CD4-positive, alpha-beta T cell (primary cell): ENCODE measurements at regions of chr16 and their contacts with region 1.

Region 1: DNA sequence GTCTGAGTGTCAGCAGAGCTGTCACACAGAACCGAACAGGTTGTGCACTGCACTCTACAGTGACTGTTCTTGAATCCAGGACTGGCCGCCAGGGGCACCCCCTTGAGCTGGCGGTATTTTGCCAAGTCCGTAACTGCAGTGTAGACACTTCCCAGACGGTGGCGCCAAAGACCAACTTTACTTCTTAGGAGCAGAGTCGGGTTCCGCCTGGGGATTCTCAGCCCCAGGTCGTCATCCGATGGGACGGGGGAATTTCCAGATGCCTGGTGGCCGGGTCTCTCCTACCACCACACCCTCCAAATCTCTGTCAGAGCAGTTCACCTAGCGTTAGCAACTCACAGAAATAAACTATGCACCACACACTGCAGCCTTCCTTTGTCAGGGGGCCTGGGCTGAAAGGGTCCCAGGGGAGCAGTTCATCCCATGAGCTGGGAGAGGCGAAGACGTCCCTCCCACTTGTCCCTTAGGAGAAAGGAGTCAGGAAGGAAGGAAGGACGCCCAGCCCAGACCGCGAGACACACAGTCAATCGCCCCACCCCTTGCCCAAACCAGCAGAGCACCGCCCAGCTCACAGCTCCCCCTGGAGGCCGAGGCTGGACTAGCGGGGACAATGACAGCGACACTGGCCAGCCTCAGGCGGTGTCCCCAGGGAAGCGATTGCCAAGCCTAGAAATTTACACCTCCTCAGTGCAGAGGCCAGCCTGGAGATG is 7.4 kb upstream of the RIPOR1 start:
- DNase-seq: peak; percentile 93 to 99 (median 97)
- ATAC-seq: peak; percentile 90
- H3K4me3 ChIP-seq: peak overlapping the region; percentile 67
- H3K4me3 Mint-ChIP-seq: peak overlapping the region; percentile 87
- H3K27ac ChIP-seq: peak overlapping the region; percentile 96 to 99
- H3K27ac Mint-ChIP-seq: peak overlapping the region; percentile 90
- H3K4me1 ChIP-seq: peaks cover 22% of the 10 kb centered on the region
- H3K4me1 Mint-ChIP-seq: peaks cover 15% of the 10 kb centered on the region
- H3K27me3 ChIP-seq: no peaks in the 10 kb centered on the region
- H3K27me3 Mint-ChIP-seq: no peaks in the 10 kb centered on the region
- CTCF ChIP-seq: peak; percentile 92

Region 2: GRCh38 chr16:67198238-67198734 is 323.0 kb before region 1 on chr16:
- CTCF ChIA-PET with region 1: no interaction called
- POLR2A ChIA-PET with region 1: no interaction called
- intact Hi-C with region 1: no loop called
- DNase-seq: peak in 3 of 14 experiments; percentile 19 to 59 (median 43)
- ATAC-seq: peak; percentile 58
- H3K4me3 ChIP-seq: no peak overlapping the region
- H3K4me3 Mint-ChIP-seq: peak overlapping the region; percentile 20
- H3K27ac ChIP-seq: no peak overlapping the region
- H3K27ac Mint-ChIP-seq: peak overlapping the region; percentile 30
- H3K4me1 ChIP-seq: peaks cover 32% of the 10 kb centered on the region
- H3K4me1 Mint-ChIP-seq: peaks cover 31% of the 10 kb centered on the region
- H3K27me3 ChIP-seq: no peaks in the 10 kb centered on the region
- H3K27me3 Mint-ChIP-seq: no peaks in the 10 kb centered on the region
- CTCF ChIP-seq: no peak

Region 3: DNA sequence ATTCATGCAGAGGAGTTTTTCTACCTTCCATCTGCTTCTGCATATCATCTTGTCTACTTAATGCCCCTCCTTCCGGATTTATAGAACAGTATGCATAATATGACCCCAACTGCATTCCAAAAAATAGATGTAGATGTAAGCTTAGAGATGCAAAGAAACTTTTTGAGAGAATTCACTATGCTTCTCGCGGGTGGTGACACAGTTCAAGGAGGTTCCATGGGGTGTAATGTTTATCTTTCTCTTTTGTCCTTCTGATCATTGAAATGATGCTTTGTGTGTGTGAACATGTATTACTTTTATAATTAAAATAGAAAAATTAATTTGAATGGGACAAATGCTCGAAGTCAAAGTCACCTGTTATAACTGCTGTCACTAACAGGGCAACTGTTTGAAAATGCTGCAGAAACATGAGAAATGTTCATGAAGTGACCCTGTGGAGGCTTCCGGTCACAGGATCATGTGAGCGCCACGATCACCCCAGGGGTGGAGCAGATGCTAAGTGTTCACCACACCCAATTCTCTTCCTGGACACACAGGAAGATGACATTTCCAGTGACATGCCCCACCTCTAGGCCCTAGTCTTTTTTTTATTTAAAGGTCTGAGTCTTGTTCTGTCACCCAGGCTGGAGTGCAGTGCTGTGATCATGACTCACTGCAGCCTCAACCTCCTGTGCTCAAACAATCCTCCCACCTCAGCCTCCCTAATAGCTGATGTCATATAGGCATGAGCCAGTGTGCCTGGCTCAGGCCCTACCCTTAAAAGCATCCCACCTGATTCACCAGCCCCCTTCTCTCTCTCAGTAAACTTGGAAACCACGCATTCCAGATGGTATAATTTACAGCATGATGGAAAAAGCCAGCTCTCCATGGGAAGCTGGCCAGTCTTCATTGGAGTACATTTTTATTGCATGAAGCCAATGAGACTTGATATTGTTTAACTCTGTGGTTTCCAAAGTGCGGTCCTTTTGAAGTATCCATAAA is 16.9 kb before region 1 on chr16:
- CTCF ChIA-PET with region 1: interaction called, 19 read pairs
- POLR2A ChIA-PET with region 1: interaction called, 3 read pairs
- intact Hi-C with region 1: no loop called
- DNase-seq: peak in 12 of 14 experiments; percentile 16 to 93 (median 34)
- ATAC-seq: peak; percentile 87
- H3K4me3 ChIP-seq: no peak overlapping the region
- H3K4me3 Mint-ChIP-seq: peak overlapping the region; percentile 52
- H3K27ac ChIP-seq: peak overlapping the region; percentile 53 to 79
- H3K27ac Mint-ChIP-seq: peak overlapping the region; percentile 91
- H3K4me1 ChIP-seq: peaks cover 58% of the 10 kb centered on the region
- H3K4me1 Mint-ChIP-seq: peaks cover 50% of the 10 kb centered on the region
- H3K27me3 ChIP-seq: no peaks in the 10 kb centered on the region
- H3K27me3 Mint-ChIP-seq: no peaks in the 10 kb centered on the region
- CTCF ChIP-seq: no peak

Region 4: DNA sequence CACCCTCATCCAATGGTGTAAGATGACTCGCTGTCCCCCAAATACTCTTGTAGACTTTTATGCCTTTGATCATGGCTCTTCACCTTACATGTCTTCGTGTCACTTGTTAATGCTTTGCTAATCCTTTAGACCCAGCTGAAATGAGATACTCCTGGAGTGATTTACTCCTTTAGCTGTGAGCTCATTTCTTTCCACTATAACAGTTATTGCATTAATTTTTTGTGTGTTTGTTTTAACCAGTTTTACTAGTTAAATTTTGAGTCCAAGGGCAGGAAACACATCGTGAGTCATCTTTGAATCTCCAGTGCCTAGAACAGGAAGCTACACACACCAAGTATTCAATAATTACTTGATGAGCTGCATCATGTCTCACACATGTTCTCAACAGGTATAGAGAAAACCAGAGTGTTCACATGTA is 34.6 kb after region 1 on chr16:
- CTCF ChIA-PET with region 1: interaction called, 16 read pairs
- POLR2A ChIA-PET with region 1: interaction called, 4 read pairs
- intact Hi-C with region 1: loop called in 1 of 2 experiments (anchors 5 kb)
- DNase-seq: peak in 4 of 14 experiments; percentile 40 to 80 (median 71)
- ATAC-seq: peak; percentile 95
- H3K4me3 ChIP-seq: no peak overlapping the region
- H3K4me3 Mint-ChIP-seq: peak overlapping the region; percentile 80
- H3K27ac ChIP-seq: peak overlapping the region; percentile 71 to 77
- H3K27ac Mint-ChIP-seq: peak overlapping the region; percentile 91
- H3K4me1 ChIP-seq: peaks cover 54% of the 10 kb centered on the region
- H3K4me1 Mint-ChIP-seq: peaks cover 52% of the 10 kb centered on the region
- H3K27me3 ChIP-seq: no peaks in the 10 kb centered on the region
- H3K27me3 Mint-ChIP-seq: no peaks in the 10 kb centered on the region
- CTCF ChIP-seq: no peak

Region 5: GRCh38 chr16:67613808-67614207 is 92.6 kb after region 1 on chr16:
- CTCF ChIA-PET with region 1: interaction called, 10 read pairs
- POLR2A ChIA-PET with region 1: no interaction called
- intact Hi-C with region 1: no loop called
- DNase-seq: peak in 3 of 14 experiments; percentile 13 to 30 (median 16)
- ATAC-seq: no peak
- H3K4me3 ChIP-seq: no peak overlapping the region
- H3K4me3 Mint-ChIP-seq: no peak overlapping the region
- H3K27ac ChIP-seq: no peak overlapping the region
- H3K27ac Mint-ChIP-seq: no peak overlapping the region
- H3K4me1 ChIP-seq: no peaks in the 10 kb centered on the region
- H3K4me1 Mint-ChIP-seq: no peaks in the 10 kb centered on the region
- H3K27me3 ChIP-seq: no peaks in the 10 kb centered on the region
- H3K27me3 Mint-ChIP-seq: no peaks in the 10 kb centered on the region
- CTCF ChIP-seq: no peak

Region 6: DNA sequence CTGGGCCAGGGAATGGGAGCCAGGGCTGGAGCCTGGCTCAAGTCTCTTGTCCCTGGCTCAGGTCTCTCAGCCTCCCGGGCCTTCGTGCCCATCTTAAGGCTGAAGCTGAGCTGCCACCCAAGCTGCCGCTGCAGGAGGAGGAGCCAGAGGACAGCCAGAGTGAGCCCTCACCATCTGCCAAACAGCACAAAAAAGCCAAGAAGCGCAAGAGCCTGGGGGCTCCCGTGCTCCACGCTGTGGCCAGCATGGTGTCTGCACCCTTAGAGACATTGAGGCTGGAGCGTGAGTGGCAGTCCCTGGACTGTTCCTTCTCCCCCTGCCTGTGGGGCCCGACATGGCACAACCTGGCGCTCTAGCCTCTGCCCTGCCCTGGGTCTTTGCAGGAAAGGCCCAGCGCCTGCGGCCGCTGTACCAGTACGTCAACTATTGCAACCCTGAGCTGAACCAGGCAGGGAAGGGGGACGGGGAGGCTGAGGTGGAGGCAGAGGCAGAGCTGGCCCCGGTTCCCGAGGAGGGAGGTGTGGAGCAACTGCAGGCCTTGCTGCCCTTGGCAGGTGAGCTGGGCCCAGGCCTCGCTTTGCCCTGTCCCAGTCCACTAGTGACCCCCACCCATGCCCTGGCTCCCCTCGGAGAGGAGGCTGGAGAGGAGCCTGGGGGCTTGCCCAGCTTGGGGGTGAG is 146.7 kb after region 1 on chr16:
- CTCF ChIA-PET with region 1: interaction called, 81 read pairs
- POLR2A ChIA-PET with region 1: interaction called, 13 read pairs
- intact Hi-C with region 1: loop called (anchors 1 kb)
- DNase-seq: peak; percentile 71 to 94 (median 81)
- ATAC-seq: peak; percentile 91
- H3K4me3 ChIP-seq: peak overlapping the region; percentile 65
- H3K4me3 Mint-ChIP-seq: peak overlapping the region; percentile 90
- H3K27ac ChIP-seq: peak overlapping the region; percentile 28 to 44
- H3K27ac Mint-ChIP-seq: peak overlapping the region; percentile 55
- H3K4me1 ChIP-seq: peaks cover 36% of the 10 kb centered on the region
- H3K4me1 Mint-ChIP-seq: peaks cover 28% of the 10 kb centered on the region
- H3K27me3 ChIP-seq: no peaks in the 10 kb centered on the region
- H3K27me3 Mint-ChIP-seq: no peaks in the 10 kb centered on the region
- CTCF ChIP-seq: peak; percentile 74

Region 7: DNA sequence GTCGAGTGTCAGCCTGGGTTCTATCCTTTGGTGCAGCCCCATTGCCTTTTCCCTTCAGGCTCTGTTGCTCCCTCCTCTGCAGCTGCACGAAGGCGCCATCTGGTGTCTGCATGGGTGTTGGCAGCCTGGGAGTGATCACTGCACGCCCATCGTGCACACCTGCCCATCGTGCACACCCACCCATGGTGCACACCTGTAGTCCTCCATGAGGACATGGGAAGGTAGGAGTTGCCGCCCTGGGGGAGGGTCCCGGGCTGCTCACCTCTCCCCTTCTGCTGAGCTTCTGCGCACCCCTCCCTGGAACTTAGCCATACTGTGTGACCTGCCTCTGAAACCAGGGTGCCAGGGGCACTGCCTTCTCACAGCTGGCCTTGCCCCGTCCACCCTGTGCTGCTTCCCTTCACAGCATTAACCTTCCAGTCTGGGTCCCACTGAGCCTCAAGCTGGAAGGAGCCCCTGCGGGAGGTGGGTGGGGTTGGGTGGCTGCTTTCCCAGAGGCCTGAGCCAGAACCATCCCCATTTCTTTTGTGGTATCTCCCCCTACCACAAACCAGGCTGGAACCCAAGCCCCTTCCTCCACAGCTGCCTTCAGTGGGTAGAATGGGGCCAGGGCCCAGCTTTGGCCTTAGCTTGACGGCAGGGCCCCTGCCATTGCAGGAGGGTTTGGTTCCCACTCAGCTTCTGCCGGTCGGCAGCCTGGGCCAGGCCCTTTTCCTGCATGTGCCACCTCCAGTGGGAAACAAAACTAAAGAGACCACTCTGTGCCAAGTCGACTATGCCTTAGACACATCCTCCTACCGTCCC is 407.5 kb after region 1 on chr16:
- CTCF ChIA-PET with region 1: interaction called, 6 read pairs
- POLR2A ChIA-PET with region 1: no interaction called
- intact Hi-C with region 1: loop called (anchors 1 to 2 kb)
- DNase-seq: peak; percentile 61 to 84 (median 73)
- ATAC-seq: peak; percentile 97
- H3K4me3 ChIP-seq: no peak overlapping the region
- H3K4me3 Mint-ChIP-seq: no peak overlapping the region
- H3K27ac ChIP-seq: no peak overlapping the region
- H3K27ac Mint-ChIP-seq: peak overlapping the region; percentile 47
- H3K4me1 ChIP-seq: peaks cover 12% of the 10 kb centered on the region
- H3K4me1 Mint-ChIP-seq: peaks cover 9% of the 10 kb centered on the region
- H3K27me3 ChIP-seq: no peaks in the 10 kb centered on the region
- H3K27me3 Mint-ChIP-seq: no peaks in the 10 kb centered on the region
- CTCF ChIP-seq: peak; percentile 82